ENCODE measurements at regions of chr7 and their contacts with region 1.

Region 1: GRCh38 chr7:121547544-121548092 is 151.5 kb upstream of the FAM3C start:
- DNase-seq: peak; percentile 78
- ATAC-seq: peak; percentile 88
- H3K4me3 ChIP-seq: no peak overlapping the region
- H3K27ac ChIP-seq: no peak overlapping the region
- H3K4me1 ChIP-seq: 0 out of 2 replicates have a peak, but pooled peaks cover 3% of the 10 kb centered on the region
- H3K27me3 ChIP-seq: peaks cover 4% of the 10 kb centered on the region
- CTCF ChIP-seq: peak; percentile 91
- POLR2A ChIP-seq: no peak
- RAD21 ChIP-seq: peak; percentile 88

Region 2: GRCh38 chr7:120987683-120988590 is 559.7 kb before region 1 on chr7:
- CTCF ChIA-PET with region 1: no interaction called
- POLR2A ChIA-PET with region 1: no interaction called
- dilution Hi-C with region 1: no loop called
- in situ Hi-C with region 1: no loop called
- intact Hi-C with region 1: loop called (anchors 5 kb)
- DNase-seq: peak; percentile 94
- ATAC-seq: peak; percentile 75
- H3K4me3 ChIP-seq: peak overlapping the region; percentile 86
- H3K27ac ChIP-seq: peak overlapping the region; percentile 95
- H3K4me1 ChIP-seq: no peaks in the 10 kb centered on the region
- H3K27me3 ChIP-seq: no peaks in the 10 kb centered on the region
- CTCF ChIP-seq: peak; percentile 96
- POLR2A ChIP-seq: peak; percentile 43; the same call in 1 of the 2 replicates
- RAD21 ChIP-seq: peak; percentile 91

Region 3: GRCh38 chr7:121163699-121164098 is 383.9 kb before region 1 on chr7:
- CTCF ChIA-PET with region 1: no interaction called
- POLR2A ChIA-PET with region 1: no interaction called
- dilution Hi-C with region 1: no loop called
- in situ Hi-C with region 1: no loop called
- intact Hi-C with region 1: loop called (anchors 5 kb)
- DNase-seq: no peak
- ATAC-seq: peak; percentile 62; the same call in 1 of the 2 replicates
- H3K4me3 ChIP-seq: no peak overlapping the region
- H3K27ac ChIP-seq: no peak overlapping the region
- H3K4me1 ChIP-seq: no peaks in the 10 kb centered on the region
- H3K27me3 ChIP-seq: no peaks in the 10 kb centered on the region
- CTCF ChIP-seq: no peak
- POLR2A ChIP-seq: no peak
- RAD21 ChIP-seq: no peak

Region 4: GRCh38 chr7:121395961-121396757 is 151.5 kb before region 1 on chr7 and contains the start of gene FAM3C:
- CTCF ChIA-PET with region 1: interaction called, 9 read pairs
- POLR2A ChIA-PET with region 1: no interaction called
- dilution Hi-C with region 1: no loop called
- in situ Hi-C with region 1: no loop called
- intact Hi-C with region 1: loop called (anchors 1 kb)
- DNase-seq: peak; percentile 88
- ATAC-seq: peak; percentile 99
- H3K4me3 ChIP-seq: peak within 1 kb of the TSS; percentile 83
- H3K27ac ChIP-seq: peak within 1 kb of the TSS; percentile 79
- H3K4me1 ChIP-seq: no peaks in the 10 kb centered on the region
- H3K27me3 ChIP-seq: no peaks in the 10 kb centered on the region
- CTCF ChIP-seq: peak; percentile 98
- POLR2A ChIP-seq: peak; percentile 95
- RAD21 ChIP-seq: no peak; the same call in 1 of the 2 replicates
- total RNA-seq, gene FAM3C: 11.5 and 35.0 TPM in 2 replicates

Region 5: GRCh38 chr7:121449329-121449728 is 98.3 kb before region 1 on chr7:
- CTCF ChIA-PET with region 1: no interaction called
- POLR2A ChIA-PET with region 1: no interaction called
- dilution Hi-C with region 1: no loop called
- in situ Hi-C with region 1: no loop called
- intact Hi-C with region 1: loop called (anchors 5 kb)
- DNase-seq: no peak
- ATAC-seq: peak; percentile 82
- H3K4me3 ChIP-seq: no peak overlapping the region
- H3K27ac ChIP-seq: no peak overlapping the region
- H3K4me1 ChIP-seq: no peaks in the 10 kb centered on the region
- H3K27me3 ChIP-seq: no peaks in the 10 kb centered on the region; the same call in 1 of the 2 replicates
- CTCF ChIP-seq: no peak
- POLR2A ChIP-seq: no peak
- RAD21 ChIP-seq: no peak

Measured in IMR-90 (cell line).